Activated CD8-positive, alpha-beta T cell treated with anti-CD3 and anti-CD28 coated beads, Interleukin-2, amount 10 ng/mL, durations not matched to agents 7 days and 5 days (primary cell): ENCODE measurements at regions of chr17 and their contacts with region 1.

Region 1: DNA sequence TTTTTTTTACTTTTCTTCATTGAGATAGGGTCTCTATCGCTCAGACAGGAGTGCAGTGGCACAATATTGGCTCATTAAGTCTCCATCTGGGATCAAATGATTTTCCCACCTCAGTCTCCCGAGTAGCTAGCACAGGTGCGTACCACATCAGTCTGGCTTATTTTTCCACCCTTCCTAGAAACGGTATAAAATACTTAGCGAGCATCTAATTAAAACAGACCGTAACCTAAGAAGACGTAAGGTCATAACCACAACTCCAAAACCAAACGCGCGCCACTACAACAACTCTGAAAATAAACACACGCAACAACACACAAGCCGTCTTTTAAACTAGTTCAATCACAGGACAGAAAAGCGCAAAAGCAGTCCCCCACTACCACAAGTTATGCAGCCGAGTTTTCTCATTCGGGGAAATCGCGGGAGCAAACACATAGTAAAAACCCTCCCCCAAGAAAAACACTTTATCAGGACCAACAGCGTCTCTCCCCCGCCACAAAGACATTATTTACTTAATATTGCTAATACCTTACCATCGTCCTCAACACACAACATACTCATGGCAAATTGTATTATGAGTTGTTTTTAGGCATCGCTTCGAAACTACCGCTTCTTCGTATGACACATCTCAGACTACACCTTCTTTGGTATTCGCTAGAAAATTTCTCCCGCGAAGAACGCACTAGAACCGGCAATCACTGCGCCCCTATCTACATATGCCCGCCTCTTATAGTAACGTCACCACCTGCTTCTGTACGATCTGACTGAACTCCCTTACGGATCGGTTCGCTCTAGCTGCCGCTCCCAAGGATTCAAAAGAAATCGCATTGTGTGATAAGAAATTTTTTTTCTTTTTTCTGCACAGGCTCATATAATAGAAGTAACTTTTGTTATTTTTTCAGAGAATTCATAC is 32.8 kb downstream of the TEX14 start:
- DNase-seq: peak; percentile 83
- ATAC-seq: peak; percentile 82
- H3K4me3 Mint-ChIP-seq: peak overlapping the region; percentile 65
- H3K27ac Mint-ChIP-seq: peak overlapping the region; percentile 90
- H3K4me1 Mint-ChIP-seq: peaks cover 19% of the 10 kb centered on the region
- H3K27me3 Mint-ChIP-seq: peaks cover 9% of the 10 kb centered on the region

Region 2: GRCh38 chr17:58692239-58693055 is 33.4 kb after region 1 on chr17 and contains the start of gene RAD51C:
- CTCF ChIA-PET with region 1: no interaction called
- POLR2A ChIA-PET with region 1: interaction called, 19 read pairs
- DNase-seq: peak; percentile 93
- ATAC-seq: peak; percentile 97
- H3K4me3 Mint-ChIP-seq: peak within 1 kb of the TSS; percentile 95
- H3K27ac Mint-ChIP-seq: peak within 1 kb of the TSS; percentile 97
- H3K4me1 Mint-ChIP-seq: peaks cover 35% of the 10 kb centered on the region
- H3K27me3 Mint-ChIP-seq: peaks cover 3% of the 10 kb centered on the region
- total RNA-seq, gene RAD51C: 70.6 to 70.8 TPM